Breast epithelium (tissue), 4 donors: ENCODE measurements at regions of chr13 and their contacts with region 1.

Region 1: GRCh38 chr13:70849222-70849621 is 741.0 kb upstream of the KLHL1 start:
- DNase-seq: no peak
- H3K4me3 ChIP-seq: no peak overlapping the region
- H3K27ac ChIP-seq: no peak overlapping the region
- H3K4me1 ChIP-seq: no peaks in the 10 kb centered on the region
- H3K27me3 ChIP-seq: no peaks in the 10 kb centered on the region
- CTCF ChIP-seq: no peak
- POLR2A ChIP-seq: no peak

Region 2: DNA sequence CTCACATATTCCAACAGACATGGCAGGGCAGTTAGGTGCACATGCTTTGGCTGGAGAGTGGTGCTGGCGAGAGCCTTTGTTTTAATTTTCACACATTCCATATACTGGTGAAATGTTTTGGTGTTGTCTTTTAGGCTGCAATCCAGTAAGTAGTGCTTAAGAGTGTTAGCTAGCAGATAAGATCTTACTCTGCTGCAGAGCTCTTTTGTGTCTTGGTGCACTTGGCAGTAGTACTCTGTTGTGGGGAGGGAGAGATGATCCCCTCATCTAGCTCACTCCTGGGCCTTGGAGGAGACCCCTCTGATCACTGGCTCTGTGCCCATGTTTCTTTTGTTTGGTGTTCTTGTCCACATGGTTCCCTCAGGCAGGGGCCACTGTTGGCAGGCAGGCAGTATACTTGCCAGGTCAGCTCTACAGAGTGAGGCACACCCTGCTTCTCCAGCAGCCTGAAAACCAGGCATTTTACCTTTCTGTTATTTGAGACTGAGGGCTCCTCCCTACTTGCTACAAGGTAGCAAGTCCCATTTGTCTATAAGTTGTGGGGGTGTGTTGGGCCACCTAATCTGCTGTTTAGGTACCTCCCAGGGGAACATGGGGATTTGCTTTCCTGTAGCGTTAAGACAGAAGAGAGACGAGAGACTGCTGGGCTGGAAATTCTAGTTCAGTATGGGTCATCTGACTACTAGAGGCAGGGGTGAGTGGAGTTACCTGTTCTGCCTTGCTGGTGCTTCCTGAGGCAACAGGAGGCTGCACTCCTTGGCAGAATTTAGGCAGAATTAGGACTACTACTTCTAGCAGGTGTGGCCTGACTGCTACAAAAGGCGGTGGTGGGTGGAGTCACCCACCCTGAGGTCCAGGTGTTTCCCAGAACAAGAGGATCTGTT is 1584.8 kb before region 1 on chr13:
- intact Hi-C with region 1: no loop called
- DNase-seq: peak in 1 of 2 donors; percentile 18
- H3K4me3 ChIP-seq: no peak overlapping the region
- H3K27ac ChIP-seq: peak overlapping the region in 1 of 2 donors; percentile 3
- H3K4me1 ChIP-seq: no peaks in the 10 kb centered on the region
- H3K27me3 ChIP-seq: no peaks in the 10 kb centered on the region
- CTCF ChIP-seq: no peak
- POLR2A ChIP-seq: no peak

Region 3: GRCh38 chr13:71730267-71730666 is 881.0 kb after region 1 on chr13:
- intact Hi-C with region 1: loop called (anchors 5 kb)
- DNase-seq: no peak
- H3K4me3 ChIP-seq: no peak overlapping the region
- H3K27ac ChIP-seq: no peak overlapping the region
- H3K4me1 ChIP-seq: no peaks in the 10 kb centered on the region
- H3K27me3 ChIP-seq: no peaks in the 10 kb centered on the region
- CTCF ChIP-seq: no peak
- POLR2A ChIP-seq: no peak